Common myeloid progenitor, CD34-positive (primary cell): ENCODE measurements at regions of chr9 and their contacts with region 1.

Region 1: DNA sequence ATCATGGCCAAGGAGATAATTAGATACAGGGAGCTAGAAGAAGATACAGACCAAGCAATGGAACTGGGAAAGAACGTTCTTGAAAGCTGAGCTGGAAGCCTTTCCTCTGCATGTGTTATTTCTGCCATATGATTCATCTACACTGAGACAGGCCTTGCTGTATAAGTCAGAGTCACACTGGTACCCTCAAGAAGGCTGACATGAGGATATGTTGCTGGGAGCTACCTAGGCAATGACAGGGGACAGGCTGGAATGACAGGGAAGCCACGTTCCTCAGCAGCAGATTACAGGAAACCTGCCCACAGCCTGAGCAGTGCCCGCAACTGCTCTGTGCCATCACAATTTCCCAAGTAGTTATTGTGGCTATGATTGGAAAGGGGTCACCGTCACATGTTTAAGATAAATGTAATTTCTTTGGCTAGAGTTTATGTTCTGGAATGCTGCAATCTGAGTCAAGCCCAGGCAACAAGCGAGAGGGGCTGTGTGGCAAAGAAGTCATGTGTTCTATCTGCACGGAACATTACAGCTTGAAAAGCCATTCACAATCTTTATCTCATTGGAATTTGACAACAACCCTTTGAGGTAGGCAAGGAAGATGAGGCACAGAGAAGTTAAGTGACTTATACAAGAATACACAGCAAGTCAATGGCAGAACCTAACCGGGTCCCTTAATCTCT is 108.2 kb downstream of the TTLL11 start:
- DNase-seq: no peak
- H3K4me3 ChIP-seq: no peak overlapping the region
- H3K27ac ChIP-seq: no peak overlapping the region
- H3K4me1 ChIP-seq: no peaks in the 10 kb centered on the region
- H3K27me3 ChIP-seq: no peaks in the 10 kb centered on the region

Region 2: GRCh38 chr9:121921444-121921843 is 63.4 kb before region 1 on chr9:
- CTCF ChIA-PET with region 1: no interaction called
- POLR2A ChIA-PET with region 1: no interaction called
- DNase-seq: no peak
- H3K4me3 ChIP-seq: no peak overlapping the region
- H3K27ac ChIP-seq: no peak overlapping the region
- H3K4me1 ChIP-seq: no peaks in the 10 kb centered on the region
- H3K27me3 ChIP-seq: no peaks in the 10 kb centered on the region

Region 3: DNA sequence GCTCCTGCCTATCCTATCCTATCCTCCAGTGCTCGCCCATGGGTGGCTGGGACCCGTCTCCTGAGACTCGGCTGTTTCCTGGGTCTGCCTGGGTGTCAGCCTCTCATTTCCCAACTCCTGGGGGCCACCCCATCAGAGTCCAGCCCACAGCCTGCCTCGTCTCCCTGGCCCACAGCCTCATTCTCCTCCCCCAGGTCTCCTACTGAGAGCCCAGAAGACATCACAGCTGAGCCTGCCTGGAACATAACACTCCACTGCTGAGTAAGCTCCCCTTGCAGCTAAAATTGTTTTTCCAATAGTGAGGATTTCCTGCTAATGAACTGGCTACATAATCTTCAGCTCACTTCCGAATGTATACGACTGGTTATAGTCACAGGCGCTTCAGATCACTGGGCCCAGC is 12.9 kb after region 1 on chr9:
- CTCF ChIA-PET with region 1: interaction called, 11 read pairs
- POLR2A ChIA-PET with region 1: no interaction called
- DNase-seq: no peak
- H3K4me3 ChIP-seq: no peak overlapping the region
- H3K27ac ChIP-seq: no peak overlapping the region
- H3K4me1 ChIP-seq: peaks cover 0 to 3% (median 0%) of the 10 kb centered on the region in 4 experiments
- H3K27me3 ChIP-seq: no peaks in the 10 kb centered on the region

Region 4: GRCh38 chr9:122087406-122088200 is 102.7 kb after region 1 on chr9:
- CTCF ChIA-PET with region 1: no interaction called
- POLR2A ChIA-PET with region 1: no interaction called
- DNase-seq: no peak
- H3K4me3 ChIP-seq: no peak overlapping the region
- H3K27ac ChIP-seq: no peak overlapping the region
- H3K4me1 ChIP-seq: peaks cover 3 to 13% (median 9%) of the 10 kb centered on the region in 4 experiments
- H3K27me3 ChIP-seq: no peaks in the 10 kb centered on the region